ENCODE measurements at regions of chr6 and their contacts with region 1.

Region 1: GRCh38 chr6:4805553-4806336 is 29.5 kb downstream of the CDYL start:
- DNase-seq: peak in 21 of 35 experiments; percentile 4 to 39 (median 18)
- ATAC-seq: peak in 2 of 4 experiments; percentile 44 to 48
- H3K4me3 ChIP-seq: no peak overlapping the region
- H3K4me3 Mint-ChIP-seq: peak overlapping the region in 1 of 3 donors; percentile 7
- H3K27ac ChIP-seq: no peak overlapping the region
- H3K27ac Mint-ChIP-seq: peak overlapping the region in 1 of 2 donors; percentile 50
- H3K4me1 ChIP-seq: peaks cover 3 to 19% of the 10 kb centered on the region in 2 experiments
- H3K4me1 Mint-ChIP-seq: peaks cover 87 to 88% (median 87%) of the 10 kb centered on the region in 3 donors
- H3K27me3 ChIP-seq: no peaks in the 10 kb centered on the region
- H3K27me3 Mint-ChIP-seq: no peaks in the 10 kb centered on the region

Region 2: DNA sequence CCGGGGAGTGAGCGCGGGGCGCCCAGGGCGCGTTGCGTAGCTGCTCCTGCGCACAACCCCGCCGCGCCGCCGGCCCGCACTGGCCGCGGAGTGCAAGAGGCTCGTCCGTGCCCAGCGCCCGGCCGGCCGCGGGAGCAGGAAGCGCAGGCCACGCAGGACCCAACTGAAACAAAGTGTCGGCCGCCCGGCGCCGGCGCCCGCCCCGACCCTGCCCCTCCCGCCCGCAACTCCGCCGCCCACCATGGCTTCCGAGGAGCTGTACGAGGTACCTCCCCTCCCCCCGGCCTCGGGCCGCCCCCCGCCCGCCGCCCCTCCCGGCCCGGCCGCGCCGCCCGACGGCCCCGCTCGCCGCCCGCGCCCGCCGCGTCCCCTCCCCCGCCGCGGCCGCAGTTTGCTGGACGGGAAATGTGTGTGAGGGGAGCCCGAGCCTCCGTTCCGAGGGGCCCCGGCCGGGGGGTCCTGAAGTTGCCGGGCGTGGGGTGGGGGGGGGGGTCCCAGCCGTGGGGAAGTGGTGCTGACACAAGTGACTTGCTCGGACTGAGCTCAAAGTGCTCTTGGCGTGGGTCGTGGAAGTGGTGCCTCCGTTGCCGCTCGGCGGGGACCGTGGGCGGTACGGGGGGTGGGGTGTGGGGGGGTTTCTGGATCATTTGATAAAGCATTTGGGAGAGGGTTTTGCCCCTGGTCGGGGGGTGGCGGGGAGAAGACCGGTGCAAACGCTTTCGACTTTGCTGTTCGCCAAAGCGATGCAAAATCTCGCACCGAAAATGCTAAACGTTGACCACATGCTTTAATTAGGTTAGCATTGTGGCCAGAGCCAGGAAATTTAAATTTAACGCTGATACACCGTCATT is 29.0 kb before region 1 on chr6:
- CTCF ChIA-PET with region 1: interaction called, 4 to 11 read pairs
- POLR2A ChIA-PET with region 1: no interaction called
- DNase-seq: peak in 28 of 35 experiments; percentile 4 to 42 (median 20)
- ATAC-seq: peak; percentile 2 to 6 (median 4)
- H3K4me3 ChIP-seq: peak overlapping the region; percentile 56 to 58
- H3K4me3 Mint-ChIP-seq: peak overlapping the region; percentile 83 to 86 (median 85)
- H3K27ac ChIP-seq: no peak overlapping the region
- H3K27ac Mint-ChIP-seq: peak overlapping the region; percentile 29 to 76
- H3K4me1 ChIP-seq: peaks cover 13 to 18% of the 10 kb centered on the region in 2 experiments
- H3K4me1 Mint-ChIP-seq: peaks cover 54 to 61% (median 56%) of the 10 kb centered on the region in 3 donors
- H3K27me3 ChIP-seq: no peaks in the 10 kb centered on the region
- H3K27me3 Mint-ChIP-seq: no peaks in the 10 kb centered on the region

Region 3: DNA sequence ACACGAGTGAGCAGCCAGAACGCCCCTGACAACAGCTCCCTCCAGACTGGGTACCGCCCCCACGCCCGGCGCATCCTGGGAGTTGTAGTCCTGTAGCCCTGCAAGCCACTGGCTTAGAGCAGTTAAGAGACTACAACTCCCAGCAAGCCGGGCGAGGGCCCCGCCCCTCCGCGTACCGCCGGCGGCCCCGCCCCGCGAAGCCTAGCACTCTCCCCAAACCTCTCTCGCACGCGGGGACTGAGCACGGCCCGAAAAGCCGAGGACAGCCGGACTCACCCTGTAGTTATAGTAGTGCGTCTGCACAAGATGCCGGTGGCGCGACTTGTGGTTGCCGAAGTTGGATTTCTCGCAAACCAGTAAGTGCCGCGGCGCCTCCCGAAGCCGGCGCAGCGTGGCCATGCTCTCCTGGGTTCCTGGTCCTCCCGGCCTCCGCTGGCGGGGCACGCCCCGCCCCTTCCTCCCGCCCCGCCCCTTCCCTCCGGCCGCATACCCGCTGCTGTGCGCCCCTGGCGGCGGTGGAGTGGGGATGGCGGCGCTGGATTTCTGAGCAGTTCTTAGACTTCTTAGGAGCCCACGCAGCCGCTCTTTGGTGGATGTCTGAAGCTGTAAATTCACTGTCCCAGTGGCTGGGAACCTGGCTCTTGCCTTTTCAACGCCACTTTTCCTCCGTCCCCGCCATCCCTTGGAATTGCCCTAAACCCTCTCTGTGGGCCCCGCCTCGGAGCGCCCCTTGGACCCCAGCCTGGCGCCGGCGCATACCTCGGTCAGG is 198.0 kb after region 1 on chr6 and contains the start of gene RPP40:
- CTCF ChIA-PET with region 1: interaction called, 3 to 10 read pairs
- POLR2A ChIA-PET with region 1: no interaction called
- DNase-seq: peak; percentile 93 to 100 (median 97)
- ATAC-seq: peak; percentile 92 to 96 (median 94)
- H3K4me3 ChIP-seq: peak within 1 kb of the TSS; percentile 67 to 81
- H3K4me3 Mint-ChIP-seq: peak within 1 kb of the TSS; percentile 86 to 90 (median 89)
- H3K27ac ChIP-seq: peak within 1 kb of the TSS; percentile 89
- H3K27ac Mint-ChIP-seq: peak within 1 kb of the TSS; percentile 93 to 96
- H3K4me1 ChIP-seq: peaks cover 3 to 15% of the 10 kb centered on the region in 2 experiments
- H3K4me1 Mint-ChIP-seq: peaks cover 0 to 18% (median 14%) of the 10 kb centered on the region in 3 donors
- H3K27me3 ChIP-seq: no peaks in the 10 kb centered on the region
- H3K27me3 Mint-ChIP-seq: no peaks in the 10 kb centered on the region
- total RNA-seq, gene RPP40: 2.0 to 7.8 (median 4.8) TPM

Region 4: GRCh38 chr6:5325173-5325572 is 519.4 kb after region 1 on chr6:
- CTCF ChIA-PET with region 1: no interaction called
- POLR2A ChIA-PET with region 1: no interaction called
- DNase-seq: no peak
- ATAC-seq: no peak
- H3K4me3 ChIP-seq: no peak overlapping the region
- H3K4me3 Mint-ChIP-seq: no peak overlapping the region
- H3K27ac ChIP-seq: no peak overlapping the region
- H3K27ac Mint-ChIP-seq: no peak overlapping the region
- H3K4me1 ChIP-seq: no peaks in the 10 kb centered on the region
- H3K4me1 Mint-ChIP-seq: peaks cover 13 to 22% (median 20%) of the 10 kb centered on the region in 3 donors
- H3K27me3 ChIP-seq: no peaks in the 10 kb centered on the region
- H3K27me3 Mint-ChIP-seq: no peaks in the 10 kb centered on the region